ENCODE measurements at regions of chr6 and their contacts with region 1.

Region 1: DNA sequence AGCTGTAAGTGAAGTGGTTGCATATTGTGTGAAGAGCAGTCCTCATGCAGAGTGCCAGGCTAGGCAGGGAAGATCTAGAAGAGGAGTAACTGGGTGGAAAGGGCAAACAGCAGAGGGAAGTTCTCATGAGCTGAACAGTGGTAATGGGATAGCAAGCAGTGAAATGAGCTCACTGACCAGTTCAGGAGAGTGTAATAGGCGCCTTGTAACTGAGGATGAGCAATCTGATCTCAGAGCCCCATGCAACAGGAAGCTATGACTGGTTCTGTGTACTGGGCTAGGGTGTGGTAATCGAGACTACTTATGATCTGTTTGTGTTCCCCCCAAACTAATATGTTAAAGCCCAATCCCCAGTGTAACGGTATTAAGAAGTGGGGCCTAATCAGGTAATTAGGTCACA is 98.6 kb downstream of the RFX6 start:
- DNase-seq: no peak
- ATAC-seq: peak; percentile 73; the same call in 1 of the 2 replicates
- H3K4me3 ChIP-seq: no peak overlapping the region
- H3K27ac ChIP-seq: no peak overlapping the region
- H3K4me1 ChIP-seq: no peaks in the 10 kb centered on the region
- H3K27me3 ChIP-seq: peaks cover 8% of the 10 kb centered on the region
- CTCF ChIP-seq: no peak

Region 2: DNA sequence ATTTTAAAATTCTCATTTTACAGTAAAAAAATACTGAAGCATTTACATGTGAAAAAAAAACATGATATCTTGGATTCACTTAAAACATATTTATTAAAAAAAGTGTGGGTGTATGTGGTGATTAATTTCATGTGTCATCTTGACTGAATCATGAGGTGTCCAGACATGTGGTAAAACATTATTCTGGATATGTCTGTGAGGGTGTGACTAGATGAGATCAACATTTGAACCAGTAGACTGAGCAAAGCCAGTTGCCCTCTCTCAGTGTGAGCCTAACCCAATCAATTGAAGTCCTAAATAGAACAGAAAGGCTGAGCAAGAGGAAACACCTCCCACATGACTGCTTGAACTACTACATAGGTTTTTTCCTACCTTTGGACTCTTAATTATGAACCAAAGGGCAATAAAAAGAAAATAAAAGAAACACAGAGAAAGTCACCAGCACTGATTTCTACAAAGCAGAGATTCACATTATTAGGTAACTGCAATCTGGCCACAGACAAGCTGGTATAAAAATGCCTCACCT is 199.3 kb after region 1 on chr6:
- CTCF ChIA-PET with region 1: no interaction called
- POLR2A ChIA-PET with region 1: no interaction called
- in situ Hi-C with region 1: no loop called
- intact Hi-C with region 1: loop called (anchors 5 kb)
- DNase-seq: no peak
- ATAC-seq: no peak
- H3K4me3 ChIP-seq: no peak overlapping the region
- H3K27ac ChIP-seq: no peak overlapping the region
- H3K4me1 ChIP-seq: no peaks in the 10 kb centered on the region
- H3K27me3 ChIP-seq: no peaks in the 10 kb centered on the region
- CTCF ChIP-seq: no peak